Breast epithelium (tissue), 4 donors: ENCODE measurements at regions of chr3 and their contacts with region 1.

Region 1: DNA sequence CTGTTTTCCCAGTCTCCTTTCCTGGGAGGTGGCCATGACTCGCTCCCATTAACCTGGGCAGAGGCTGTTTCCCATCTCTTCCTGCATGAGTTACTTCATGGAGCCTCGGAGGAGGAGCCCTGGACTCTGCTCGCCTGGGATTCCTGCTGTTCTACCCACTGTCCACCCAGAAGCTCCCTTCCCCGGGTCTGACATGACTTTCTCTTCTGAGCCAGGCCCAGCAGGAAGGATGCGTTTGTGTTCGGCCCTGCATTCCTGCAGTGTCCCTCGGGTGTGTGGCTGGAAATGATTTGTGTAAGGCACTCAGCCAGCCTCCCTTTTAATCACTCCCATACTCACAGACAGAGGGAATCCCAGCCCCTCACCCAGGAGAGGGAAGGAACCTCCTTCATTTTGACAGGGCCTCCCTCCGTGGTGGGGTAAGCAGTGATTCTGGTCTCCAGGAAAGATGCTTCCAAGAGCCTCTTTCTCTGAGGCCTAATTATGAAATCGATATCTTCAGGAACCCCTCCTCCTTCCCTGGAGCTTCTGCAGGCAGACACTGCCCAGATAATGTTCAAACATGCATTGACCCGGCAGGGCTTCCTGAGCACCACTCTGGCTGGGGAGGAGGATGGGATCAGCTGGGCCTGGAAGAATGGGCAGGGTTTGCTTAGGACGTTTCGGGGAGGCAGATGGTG is 41.6 kb upstream of the DLG1 start:
- DNase-seq: no peak
- H3K4me3 ChIP-seq: no peak overlapping the region
- H3K27ac ChIP-seq: peak overlapping the region; percentile 45 to 66
- H3K4me1 ChIP-seq: no peaks in the 10 kb centered on the region
- H3K27me3 ChIP-seq: no peaks in the 10 kb centered on the region
- CTCF ChIP-seq: no peak
- POLR2A ChIP-seq: no peak

Region 2: DNA sequence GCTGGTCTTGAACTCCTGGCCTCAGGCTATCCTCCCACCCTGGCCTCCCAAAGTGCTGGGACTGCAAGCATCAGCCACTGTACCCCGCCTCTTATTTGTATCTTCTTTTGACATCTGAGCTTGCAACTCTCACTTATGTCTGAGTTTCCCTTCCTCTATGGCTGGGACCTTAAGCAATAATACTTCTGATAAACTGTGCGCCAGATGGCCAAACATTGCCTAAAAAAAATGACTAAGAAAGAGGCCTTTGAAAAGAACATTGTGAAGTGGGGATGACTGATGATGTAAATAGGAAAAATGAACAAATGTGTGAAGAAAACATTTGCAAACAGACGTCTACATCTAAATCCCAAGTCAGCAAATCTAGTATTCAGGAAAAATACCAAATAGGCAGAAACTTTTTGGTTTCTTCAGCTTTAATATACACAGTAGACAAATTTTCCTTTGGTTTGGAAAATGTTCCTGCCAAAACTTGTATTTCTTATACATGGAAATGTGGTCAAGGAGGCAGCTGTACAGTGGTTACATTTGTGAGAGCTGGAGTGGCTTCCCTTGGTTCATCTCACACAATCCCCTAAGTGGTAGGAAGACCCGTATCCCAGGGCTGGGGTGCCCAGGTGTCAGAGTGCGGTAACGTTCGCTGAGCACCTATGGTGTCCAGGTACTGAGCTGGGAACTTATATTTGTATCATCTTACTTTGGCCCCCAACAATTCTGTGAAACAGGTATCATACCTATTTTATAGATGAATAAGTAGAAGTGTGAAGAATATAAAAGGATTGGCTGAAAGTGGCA is 1246.5 kb before region 1 on chr3:
- intact Hi-C with region 1: loop called (anchors 5 kb)
- DNase-seq: no peak
- H3K4me3 ChIP-seq: no peak overlapping the region
- H3K27ac ChIP-seq: peak overlapping the region in 1 of 2 donors; percentile 38
- H3K4me1 ChIP-seq: no peaks in the 10 kb centered on the region
- H3K27me3 ChIP-seq: no peaks in the 10 kb centered on the region
- CTCF ChIP-seq: no peak
- POLR2A ChIP-seq: no peak

Region 3: GRCh38 chr3:197354319-197355001 is 14.5 kb after region 1 on chr3:
- intact Hi-C with region 1: loop called (anchors 1 kb)
- DNase-seq: no peak
- H3K4me3 ChIP-seq: peak overlapping the region in 2 of 3 donors; percentile 15 to 43
- H3K27ac ChIP-seq: peak overlapping the region; percentile 33 to 71
- H3K4me1 ChIP-seq: no peaks in the 10 kb centered on the region
- H3K27me3 ChIP-seq: no peaks in the 10 kb centered on the region
- CTCF ChIP-seq: no peak
- POLR2A ChIP-seq: no peak